ENCODE measurements at regions of chr11 and their contacts with region 1.

Region 1: GRCh38 chr11:102933627-102934026 is 21.9 kb downstream of the MMP13 start:
- DNase-seq: no peak
- H3K4me3 ChIP-seq: no peak overlapping the region
- H3K27ac ChIP-seq: no peak overlapping the region
- H3K4me1 ChIP-seq: peaks cover 0 to 1% (median 0%) of the 10 kb centered on the region in 3 donors
- H3K27me3 ChIP-seq: peaks cover 0 to 17% (median 0%) of the 10 kb centered on the region in 4 donors
- CTCF ChIP-seq: no peak
- POLR2A ChIP-seq: no peak

Region 2: GRCh38 chr11:102810945-102811660 is 122.5 kb before region 1 on chr11:
- intact Hi-C with region 1: loop called (anchors 10 kb)
- DNase-seq: no peak
- H3K4me3 ChIP-seq: no peak overlapping the region
- H3K27ac ChIP-seq: no peak overlapping the region
- H3K4me1 ChIP-seq: no peaks in the 10 kb centered on the region
- H3K27me3 ChIP-seq: peaks cover 0 to 10% (median 0%) of the 10 kb centered on the region in 4 donors
- CTCF ChIP-seq: peak in 5 of 6 experiments; percentile 18 to 54 (median 28)
- POLR2A ChIP-seq: no peak